Posterior vena cava (tissue), 2 donors: ENCODE measurements at regions of chr12 and their contacts with region 1.

Region 1: GRCh38 chr12:111313833-111314259 is 55.0 kb downstream of the PHETA1 start:
- DNase-seq: peak; percentile 93

Region 2: GRCh38 chr12:110937104-110937641 is 376.7 kb before region 1 on chr12:
- intact Hi-C with region 1: loop called (anchors 5 kb)
- DNase-seq: peak; percentile 90

Region 3: GRCh38 chr12:111024205-111024801 is 289.5 kb before region 1 on chr12:
- intact Hi-C with region 1: loop called (anchors 5 to 10 kb)
- DNase-seq: no peak

Region 4: DNA sequence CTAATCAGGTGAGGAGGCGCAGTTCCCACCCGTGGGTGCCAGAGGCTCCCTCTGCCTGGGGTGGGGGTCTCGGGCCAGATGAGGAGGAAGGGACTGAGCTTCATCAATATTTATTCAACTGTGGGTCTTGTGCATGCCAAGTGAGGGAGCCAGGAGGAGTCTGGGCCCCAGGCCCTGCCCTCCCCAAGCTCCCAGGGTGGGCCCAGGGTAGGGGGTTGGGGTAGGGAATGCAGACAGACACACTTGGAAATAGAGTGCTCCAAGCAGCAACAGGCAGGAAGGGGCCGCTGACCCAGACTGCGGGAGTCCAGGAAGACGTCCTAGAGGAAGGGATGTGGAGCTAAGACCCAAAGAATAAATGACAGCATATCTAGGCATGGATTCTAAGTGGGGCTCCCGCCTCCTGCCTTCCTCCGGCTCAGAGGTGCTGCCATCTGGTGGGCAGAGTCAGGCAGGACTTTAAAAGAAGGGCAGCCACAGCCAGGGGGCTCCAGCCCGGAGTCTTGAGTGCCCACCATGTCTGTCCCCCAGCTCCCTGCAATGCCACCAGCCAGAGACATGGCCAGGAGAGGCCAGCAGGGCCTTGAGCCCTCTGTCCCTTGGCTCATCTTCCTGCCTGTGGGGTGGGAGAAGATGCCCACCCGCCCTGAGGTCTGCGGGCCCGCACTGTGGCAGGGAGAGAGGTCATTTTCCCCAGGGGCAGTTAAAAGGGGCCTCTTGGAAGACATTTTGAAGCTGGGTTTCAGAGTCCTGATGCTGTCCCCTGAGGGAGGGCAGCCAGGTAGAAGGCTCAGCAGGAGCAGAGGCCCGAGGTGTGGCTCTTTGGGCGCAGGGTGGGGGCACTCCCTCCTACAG is 15.0 kb before region 1 on chr12:
- intact Hi-C with region 1: no loop called
- DNase-seq: no peak

Region 5: GRCh38 chr12:111343181-111343580 is 29.3 kb after region 1 on chr12:
- intact Hi-C with region 1: loop called in 1 of 2 experiments (anchors 1 kb)
- DNase-seq: no peak

Region 6: GRCh38 chr12:111599459-111600204 is 285.8 kb after region 1 on chr12:
- intact Hi-C with region 1: no loop called
- DNase-seq: peak; percentile 98